Left ventricle myocardium superior (tissue), 1 donor: ENCODE measurements at regions of chr9 and their contacts with region 1.

Region 1: DNA sequence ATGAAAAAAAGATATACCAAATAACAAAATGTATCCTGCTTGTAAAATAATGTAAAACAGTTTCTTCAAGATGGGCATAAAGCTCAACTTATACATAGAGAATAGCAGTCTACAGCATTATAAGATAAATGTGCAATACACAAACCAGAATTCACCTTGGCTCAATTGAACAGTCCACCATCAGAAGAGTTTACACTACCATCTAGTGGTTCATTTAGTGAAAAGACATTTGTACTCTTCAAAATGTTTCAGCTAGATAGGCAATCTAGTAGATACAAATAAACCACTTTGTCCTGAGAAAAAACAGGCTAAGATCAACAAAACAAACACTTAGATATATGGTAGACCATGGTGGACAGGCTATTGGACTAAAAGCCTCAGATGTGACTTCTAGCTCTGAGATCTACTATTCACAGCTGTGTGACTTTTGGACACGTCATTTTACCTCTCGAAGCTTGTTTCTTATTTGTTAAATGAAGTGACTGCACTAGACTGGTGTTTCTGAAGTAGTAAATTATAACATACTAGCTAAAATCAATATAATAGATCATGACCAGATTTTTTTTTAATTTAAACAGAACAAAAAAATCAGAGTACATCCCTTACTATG is 22.1 kb upstream of the TPD52L3 start:
- DNase-seq: no peak
- ATAC-seq: peak; percentile 60

Region 2: GRCh38 chr9:5886114-5886939 is 419.7 kb before region 1 on chr9:
- intact Hi-C with region 1: loop called (anchors 10 kb)
- DNase-seq: peak; percentile 82
- ATAC-seq: peak; percentile 87

Region 3: DNA sequence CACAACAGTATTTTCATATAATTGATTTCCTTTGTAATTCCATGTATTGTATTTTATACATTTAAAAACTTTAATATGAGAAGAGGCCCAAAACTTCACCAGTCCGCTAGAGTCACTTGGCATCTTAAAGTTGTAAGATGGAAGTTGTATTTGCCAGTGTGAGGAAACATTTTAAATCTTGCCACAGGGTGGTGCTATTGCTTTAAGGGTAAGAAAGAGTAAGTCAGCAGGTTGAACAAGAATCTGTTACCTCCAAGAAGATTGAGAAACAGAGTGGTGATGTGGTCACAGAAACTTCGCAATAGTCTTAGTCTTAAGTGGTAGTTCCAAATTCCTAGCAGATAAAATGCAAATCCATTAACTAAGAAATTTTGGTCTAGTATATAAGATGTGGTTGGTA is 250.8 kb before region 1 on chr9:
- intact Hi-C with region 1: loop called (anchors 10 kb)
- DNase-seq: no peak
- ATAC-seq: peak; percentile 84

Region 4: DNA sequence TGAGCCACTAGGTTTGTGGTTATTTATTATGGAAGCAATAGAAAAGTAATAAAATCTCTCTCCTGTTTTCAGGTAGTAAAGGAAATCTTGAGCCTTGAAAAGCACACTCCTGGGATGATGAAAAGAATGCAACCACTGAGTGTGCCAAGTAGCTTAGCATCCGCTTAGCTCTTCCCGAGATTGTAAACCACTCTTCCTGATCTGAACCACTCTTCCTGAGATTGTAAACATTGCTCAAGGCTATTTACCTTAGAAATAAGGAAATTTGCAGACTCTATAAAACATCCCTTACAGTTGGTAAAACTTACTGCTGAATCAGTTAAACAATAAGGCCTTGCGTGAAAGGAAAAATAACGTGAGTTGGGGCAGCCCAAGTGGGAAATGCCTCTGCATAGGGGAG is 107.8 kb before region 1 on chr9:
- intact Hi-C with region 1: loop called (anchors 2 kb)
- DNase-seq: no peak
- ATAC-seq: no peak

Region 5: GRCh38 chr9:6495466-6495865 is 189.4 kb after region 1 on chr9:
- intact Hi-C with region 1: no loop called
- DNase-seq: no peak
- ATAC-seq: peak; percentile 66